ENCODE measurements at regions of chr2 and their contacts with region 1.

Region 1: DNA sequence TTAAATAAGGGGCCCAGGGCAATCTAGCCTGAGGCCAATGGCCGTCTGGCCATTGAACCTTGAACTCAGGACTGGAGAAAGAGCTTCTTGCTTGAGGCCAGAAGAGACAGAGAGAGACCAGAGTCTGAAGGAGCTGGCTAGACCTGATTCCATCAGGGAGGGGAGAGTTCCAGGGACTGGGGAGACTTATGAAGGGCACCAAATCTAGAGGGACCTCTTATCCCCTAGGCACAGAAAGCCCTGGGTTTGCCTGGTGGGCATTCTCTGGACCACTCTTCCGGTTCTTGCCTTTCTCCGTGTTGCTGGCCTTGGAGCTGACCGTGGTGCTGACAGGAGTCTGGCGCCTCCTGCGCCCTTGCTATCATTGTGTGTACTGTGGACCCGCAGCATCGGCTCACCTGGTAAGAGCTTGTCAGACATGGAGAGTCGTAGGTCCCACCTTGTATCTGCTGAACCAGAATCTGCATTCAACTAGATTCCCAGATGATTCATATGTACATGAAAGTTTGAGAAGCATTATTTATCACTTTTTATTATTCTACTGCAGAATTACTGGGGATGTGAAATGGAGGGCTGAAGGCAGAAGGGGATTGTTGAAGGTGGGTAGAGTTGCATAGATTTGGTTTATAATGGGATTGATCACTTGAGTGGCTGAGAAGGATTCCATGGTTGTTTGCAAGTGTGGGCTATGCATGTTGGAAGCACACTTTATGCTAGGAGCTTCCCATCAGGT is 4.3 kb upstream of the TRPM8 start:
- DNase-seq: no peak

Region 2: GRCh38 chr2:233901367-233901766 is 11.5 kb before region 1 on chr2:
- intact Hi-C with region 1: loop called in 1 of 2 experiments (anchors 1 kb)
- DNase-seq: no peak